GM13977 (cell line): ENCODE measurements at regions of chr10 and their contacts with region 1.

Region 1: GRCh38 chr10:52488606-52489485 is 174.8 kb downstream of the DKK1 start:
- DNase-seq: peak; percentile 17
- CTCF ChIP-seq: peak; percentile 49

Region 2: DNA sequence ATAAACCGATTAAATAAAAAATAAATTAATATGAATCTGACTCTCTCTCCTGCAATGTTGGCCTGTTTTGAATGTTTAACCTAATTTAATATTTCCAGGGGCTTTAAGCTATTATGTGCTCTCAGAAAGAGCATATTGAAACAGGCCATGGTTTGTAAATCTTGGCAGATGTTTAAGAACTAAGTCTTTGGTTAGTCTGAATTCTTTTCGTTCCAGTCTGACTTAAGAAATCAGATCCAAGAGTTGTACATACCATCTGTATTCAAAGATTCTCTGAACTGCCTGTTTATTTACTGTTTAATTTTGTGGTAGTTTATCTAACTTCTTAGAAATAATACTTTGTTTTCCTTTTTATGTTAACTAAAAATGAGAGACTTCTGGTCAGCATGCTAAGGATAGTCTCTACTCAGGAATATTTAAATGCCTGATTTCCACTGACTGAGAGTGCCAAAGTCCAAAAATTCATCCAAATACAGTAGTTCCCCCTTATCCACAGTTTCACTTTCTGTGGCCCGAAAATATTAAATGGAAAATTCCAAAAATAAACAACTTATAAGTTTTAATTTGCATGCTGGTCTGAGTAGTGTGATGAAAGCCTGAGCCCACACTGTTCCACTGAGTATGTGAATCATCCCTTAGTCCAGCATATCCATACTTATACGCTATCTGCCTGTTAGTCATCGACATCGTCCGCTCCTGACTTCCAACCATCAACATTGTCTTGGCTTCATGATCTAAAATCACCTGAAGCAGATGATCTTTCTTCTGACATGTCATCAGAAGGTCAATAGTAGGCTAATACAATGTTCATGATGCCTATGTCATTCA is 551.3 kb before region 1 on chr10:
- in situ Hi-C with region 1: no loop called
- DNase-seq: no peak
- CTCF ChIP-seq: no peak

Region 3: GRCh38 chr10:52313933-52314816 is 174.7 kb before region 1 on chr10 and contains the start of gene DKK1:
- in situ Hi-C with region 1: loop called (anchors 10 kb)
- DNase-seq: peak; percentile 28
- CTCF ChIP-seq: peak; percentile 62